ENCODE measurements at regions of chr10 and their contacts with region 1.

Region 1: DNA sequence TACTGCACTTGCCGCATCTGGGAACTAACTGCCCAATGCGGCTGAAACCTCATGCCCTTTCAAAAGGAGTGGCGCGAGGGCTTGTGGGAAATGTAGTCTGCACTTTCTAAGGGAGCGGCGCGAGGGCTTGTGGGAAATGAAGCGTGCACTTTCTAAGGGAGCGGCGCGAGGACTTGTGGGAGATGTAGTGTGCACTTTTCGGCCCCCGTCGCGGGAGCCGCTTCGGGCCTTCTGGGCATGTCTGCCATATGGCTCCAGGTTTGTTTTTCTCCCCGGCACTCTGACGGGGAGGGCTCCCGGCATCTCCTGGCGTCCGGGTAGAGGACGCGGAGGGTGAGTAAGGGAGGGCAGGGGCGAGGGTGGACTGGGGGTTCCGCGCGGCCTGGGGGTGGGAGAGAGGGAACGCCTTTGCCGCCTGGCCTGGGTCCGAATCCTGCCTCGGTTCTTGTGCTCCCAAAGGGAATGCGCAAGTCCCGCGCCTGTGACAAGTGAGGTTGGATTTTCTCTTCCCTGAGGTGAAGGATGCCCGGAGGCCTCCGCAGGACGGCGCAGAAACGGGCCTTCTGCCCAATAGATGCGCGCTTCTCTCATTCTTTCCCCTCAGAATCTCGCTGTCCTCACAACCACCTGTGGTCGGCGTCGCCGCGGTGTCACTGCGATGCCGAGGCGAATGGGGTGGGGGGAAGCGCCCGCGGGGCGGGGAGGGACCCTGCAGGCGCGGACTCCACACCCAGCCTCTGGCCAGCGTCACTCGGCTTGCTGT is at the start of gene ZNF37A:
- DNase-seq: peak; percentile 85 to 99 (median 95)

Region 2: GRCh38 chr10:37857287-37858211 is 236.8 kb before region 1 on chr10 and contains the start of gene ZNF248:
- intact Hi-C with region 1: loop called (anchors 5 kb)
- DNase-seq: peak; percentile 92 to 98 (median 96)

Region 3: GRCh38 chr10:38010119-38010903 is 84.0 kb before region 1 on chr10 and contains the start of gene ZNF33A:
- intact Hi-C with region 1: loop called (anchors 2 kb)
- DNase-seq: peak; percentile 84 to 97 (median 92)